ENCODE measurements at regions of chr17 and their contacts with region 1.

Region 1: GRCh38 chr17:82244413-82245140 is 15.7 kb downstream of the SLC16A3 start:
- DNase-seq: peak in 1 of 2 experiments; percentile 69
- ATAC-seq: peak in 1 of 2 experiments; percentile 17; a peak in 3 of 6 replicates
- H3K4me3 ChIP-seq: no peak overlapping the region
- H3K27ac ChIP-seq: 0 out of 6 replicates have a peak overlapping the region, but pooled peaks of 1 of the 2 experiments have one; percentile 1
- H3K4me1 ChIP-seq: peaks cover 88% of the 10 kb centered on the region
- CTCF ChIP-seq: peak; percentile 81
- EP300 ChIP-seq: no peak
- POLR2A ChIP-seq: no peak
- RAD21 ChIP-seq: peak; percentile 87 to 89

Region 2: GRCh38 chr17:82170412-82170961 is 74.1 kb before region 1 on chr17:
- CTCF ChIA-PET with region 1: no interaction called
- POLR2A ChIA-PET with region 1: no interaction called
- DNase-seq: no peak
- ATAC-seq: peak in 1 of 2 experiments; percentile 8; a peak in 1 of 6 replicates
- H3K4me3 ChIP-seq: no peak overlapping the region
- H3K27ac ChIP-seq: no peak overlapping the region
- H3K4me1 ChIP-seq: no peaks in the 10 kb centered on the region
- CTCF ChIP-seq: no peak
- EP300 ChIP-seq: no peak
- POLR2A ChIP-seq: no peak
- RAD21 ChIP-seq: no peak

Region 3: DNA sequence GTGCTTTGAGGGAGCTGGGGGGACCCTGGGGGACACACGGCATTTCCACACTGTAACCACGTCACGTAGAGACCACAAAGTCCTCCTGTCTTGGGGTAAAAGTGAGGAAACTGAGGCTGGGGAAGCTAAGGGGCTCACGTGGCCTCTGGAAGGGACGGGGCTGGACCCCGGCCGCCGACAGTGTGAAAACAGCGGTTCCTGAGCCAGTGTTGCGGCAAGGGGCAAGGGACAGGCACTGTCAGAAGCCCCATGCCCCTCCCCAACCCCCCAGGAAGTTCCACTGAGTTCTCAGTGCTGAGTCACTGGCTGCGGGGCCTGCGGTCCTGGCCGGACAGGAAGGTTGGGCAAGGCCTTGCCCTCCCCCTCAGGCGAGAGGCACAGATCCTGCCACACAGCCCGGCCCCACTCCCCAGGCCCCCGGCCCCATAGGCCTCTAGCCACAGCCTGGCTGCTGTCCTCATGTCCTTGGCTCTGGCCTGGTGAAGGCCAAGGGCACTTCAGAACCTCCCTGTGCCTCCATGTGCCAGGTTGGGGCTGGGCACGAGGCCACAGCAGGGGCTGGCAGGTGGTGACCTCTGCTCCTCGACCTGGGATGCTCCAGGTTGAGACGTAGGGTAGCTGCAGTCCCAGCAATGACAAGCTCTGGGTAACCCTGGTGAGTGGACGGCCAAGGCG is 26.9 kb before region 1 on chr17:
- CTCF ChIA-PET with region 1: interaction called, 12 read pairs
- POLR2A ChIA-PET with region 1: interaction called, 3 read pairs
- DNase-seq: peak in 1 of 2 experiments; percentile 83
- ATAC-seq: peak in 1 of 2 experiments; percentile 31; a peak in 3 of 6 replicates
- H3K4me3 ChIP-seq: no peak overlapping the region
- H3K27ac ChIP-seq: peak overlapping the region; percentile 96
- H3K4me1 ChIP-seq: peaks cover 57% of the 10 kb centered on the region
- CTCF ChIP-seq: no peak
- EP300 ChIP-seq: peak in 1 of 2 experiments; percentile 45; a peak in 1 of 5 replicates
- POLR2A ChIP-seq: no peak
- RAD21 ChIP-seq: no peak

Region 4: DNA sequence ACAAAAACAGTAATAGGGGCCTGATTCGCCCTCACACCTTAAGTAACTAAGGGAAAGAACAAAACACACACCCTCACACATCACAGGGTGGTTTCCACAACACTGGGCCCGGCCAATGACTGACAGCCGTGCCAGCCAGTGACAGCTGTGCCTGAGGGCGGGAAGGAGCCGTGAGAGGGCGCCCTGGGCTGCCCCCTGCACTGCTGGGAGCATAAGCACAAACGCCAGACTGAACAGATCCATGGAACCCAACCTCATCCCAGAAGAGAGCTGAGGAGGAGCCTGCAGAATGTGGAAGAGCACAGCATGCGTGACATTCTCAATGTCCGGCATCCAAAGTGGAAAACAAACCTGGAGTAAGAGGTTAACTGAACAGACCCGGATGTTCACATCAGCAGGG is 12.9 kb after region 1 on chr17:
- CTCF ChIA-PET with region 1: interaction called, 49 read pairs
- POLR2A ChIA-PET with region 1: no interaction called
- DNase-seq: peak in 1 of 2 experiments; percentile 74
- ATAC-seq: peak; percentile 76 to 91
- H3K4me3 ChIP-seq: no peak overlapping the region
- H3K27ac ChIP-seq: no peak overlapping the region
- H3K4me1 ChIP-seq: 0 out of 3 replicates have a peak, but pooled peaks cover 6% of the 10 kb centered on the region
- CTCF ChIP-seq: no peak
- EP300 ChIP-seq: no peak
- POLR2A ChIP-seq: no peak
- RAD21 ChIP-seq: no peak

Region 5: GRCh38 chr17:82283208-82283749 is 38.7 kb after region 1 on chr17:
- CTCF ChIA-PET with region 1: interaction called, 18 read pairs
- POLR2A ChIA-PET with region 1: interaction called, 3 read pairs
- DNase-seq: peak; percentile 69
- ATAC-seq: peak; percentile 48 to 57
- H3K4me3 ChIP-seq: no peak overlapping the region
- H3K27ac ChIP-seq: peak overlapping the region; percentile 82 to 87
- H3K4me1 ChIP-seq: peaks cover 46% of the 10 kb centered on the region
- CTCF ChIP-seq: no peak
- EP300 ChIP-seq: peak; percentile 21 to 48; a peak in 2 of 5 replicates
- POLR2A ChIP-seq: no peak
- RAD21 ChIP-seq: no peak; a peak in 1 of 5 replicates

Region 6: DNA sequence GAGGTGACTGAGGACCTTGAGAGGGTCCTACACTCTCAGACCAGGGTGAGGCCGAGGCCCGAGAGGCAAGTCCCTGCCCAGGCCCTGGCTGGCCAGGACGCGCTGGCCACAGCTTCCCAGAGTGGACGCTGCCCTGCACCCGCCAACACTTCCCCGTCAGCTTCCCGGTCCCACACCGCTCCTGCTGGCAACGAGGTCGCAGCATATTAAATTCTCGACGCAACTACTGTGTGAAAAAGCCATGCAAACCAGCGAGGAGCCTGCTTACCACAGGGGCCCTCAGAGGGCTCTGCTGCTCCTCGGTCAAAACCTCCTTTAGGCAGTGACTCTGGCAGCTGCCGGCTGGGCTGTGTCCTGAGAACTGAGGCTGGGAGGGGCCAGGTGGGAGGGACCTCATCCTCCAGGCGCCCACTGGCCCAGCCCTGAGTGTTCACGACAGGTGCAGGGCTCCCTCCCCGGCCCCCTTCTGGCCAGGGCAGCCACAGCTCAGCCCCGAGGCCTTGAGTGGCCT is 112.3 kb after region 1 on chr17:
- CTCF ChIA-PET with region 1: no interaction called
- POLR2A ChIA-PET with region 1: no interaction called
- DNase-seq: no peak
- ATAC-seq: peak; percentile 16 to 36; a peak in 4 of 6 replicates
- H3K4me3 ChIP-seq: no peak overlapping the region
- H3K27ac ChIP-seq: no peak overlapping the region
- H3K4me1 ChIP-seq: peaks cover 18% of the 10 kb centered on the region
- CTCF ChIP-seq: no peak
- EP300 ChIP-seq: no peak
- POLR2A ChIP-seq: no peak
- RAD21 ChIP-seq: no peak